Posterior vena cava (tissue), 2 donors: ENCODE measurements at regions of chr4 and their contacts with region 1.

Region 1: DNA sequence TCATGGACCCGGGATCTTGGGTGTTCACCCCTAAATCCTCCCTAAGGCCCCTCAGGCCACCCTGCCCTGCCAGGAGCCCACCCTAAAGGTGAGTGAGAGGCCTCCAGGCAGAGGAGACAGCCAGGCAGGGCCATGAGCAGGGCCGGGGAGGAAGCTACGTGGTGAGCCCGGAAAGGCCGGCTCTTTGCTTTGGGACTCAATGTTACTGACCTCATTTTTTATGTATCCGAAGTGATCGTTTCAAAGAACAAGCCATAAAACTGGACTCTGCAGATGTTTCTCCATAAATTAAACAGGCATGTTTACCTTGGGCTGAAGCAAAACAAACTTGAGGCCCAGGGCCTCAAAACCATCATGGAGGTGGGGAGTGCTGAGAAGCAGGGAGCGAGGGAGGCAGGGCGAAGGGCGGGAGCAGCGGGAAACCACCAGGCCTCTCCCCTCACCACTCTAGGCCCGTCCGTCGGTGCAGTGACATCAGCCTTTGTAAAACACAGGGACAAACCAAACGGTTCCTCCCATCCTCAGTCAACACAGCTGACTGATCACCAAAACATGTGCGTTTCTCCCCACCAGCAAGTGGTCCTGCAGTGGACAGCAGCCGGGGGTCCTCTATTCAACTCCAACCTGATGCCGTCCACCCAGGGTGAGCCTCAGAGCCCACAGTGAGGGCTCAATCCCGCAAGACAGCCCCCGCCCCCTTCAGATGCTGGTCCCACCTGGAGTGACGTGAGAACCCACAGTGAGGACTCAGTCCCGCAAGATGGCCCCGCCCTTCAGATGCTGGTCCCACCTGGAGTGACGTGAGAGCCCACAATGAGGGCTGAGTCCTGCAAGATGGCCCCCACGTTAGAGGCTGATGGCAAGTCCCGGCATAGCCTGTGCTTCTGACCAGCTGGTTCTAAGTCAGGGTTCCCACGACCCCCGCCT is 102.9 kb upstream of the LRPAP1 start:
- DNase-seq: peak; percentile 56

Region 2: DNA sequence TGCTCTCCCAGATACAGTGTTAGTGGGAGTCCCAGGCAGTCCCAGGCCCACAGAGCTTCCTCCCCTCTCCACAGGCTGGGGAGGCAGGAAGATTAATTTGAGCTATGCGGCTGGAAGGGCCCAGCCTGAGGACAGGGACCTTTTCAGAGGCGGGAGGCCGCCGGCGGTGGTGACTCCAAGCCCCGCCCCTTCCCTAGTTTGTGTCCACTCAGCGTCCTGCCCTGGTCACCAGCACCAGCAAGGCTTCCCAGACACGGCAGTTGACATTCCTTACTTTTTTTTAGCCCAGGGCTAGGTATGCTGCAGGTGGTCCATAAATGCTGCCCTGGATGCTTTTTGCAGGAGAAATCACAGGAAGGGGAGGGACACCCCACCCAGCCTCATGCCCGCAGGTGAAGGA is 35.2 kb before region 1 on chr4:
- intact Hi-C with region 1: loop called in 1 of 2 experiments (anchors 2 kb)
- DNase-seq: no peak

Region 3: DNA sequence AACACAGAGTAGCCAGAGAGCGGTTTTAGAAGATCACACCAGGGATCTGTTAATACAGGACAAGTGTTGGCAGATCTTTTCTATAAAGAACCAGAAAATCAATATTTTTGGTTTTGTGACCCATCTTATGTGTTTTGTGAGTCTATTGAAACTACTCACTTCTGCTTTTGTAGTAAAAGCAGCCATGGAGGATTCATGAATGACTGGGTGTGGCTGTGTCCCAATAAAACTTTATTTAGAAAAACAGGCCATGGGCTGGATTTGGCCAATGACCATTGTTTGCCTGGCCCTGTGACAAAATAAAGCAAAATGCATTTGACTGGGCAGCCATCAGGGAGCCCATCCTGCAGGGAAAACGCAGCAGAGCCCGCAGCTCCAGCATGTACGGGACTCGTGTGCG is 31.1 kb after region 1 on chr4:
- intact Hi-C with region 1: no loop called
- DNase-seq: no peak